Gastrocnemius medialis (tissue), 4 donors: ENCODE measurements at regions of chr7 and their contacts with region 1.

Region 1: GRCh38 chr7:99504603-99505323 is at the start of gene ZKSCAN5:
- DNase-seq: peak; percentile 98
- ATAC-seq: peak; percentile 93
- H3K4me3 ChIP-seq: peak within 1 kb of the TSS; percentile 82 to 99 (median 94)
- H3K27ac ChIP-seq: peak within 1 kb of the TSS; percentile 97 to 99 (median 98)
- H3K4me1 ChIP-seq: peaks cover 29 to 30% of the 10 kb centered on the region in 2 donors
- H3K27me3 ChIP-seq: no peaks in the 10 kb centered on the region
- CTCF ChIP-seq: peak in 1 of 5 experiments; percentile 14
- POLR2A ChIP-seq: peak; percentile 53 to 83
- total RNA-seq, gene ZKSCAN5: 7.3 to 12.3 (median 10.5) TPM

Region 2: DNA sequence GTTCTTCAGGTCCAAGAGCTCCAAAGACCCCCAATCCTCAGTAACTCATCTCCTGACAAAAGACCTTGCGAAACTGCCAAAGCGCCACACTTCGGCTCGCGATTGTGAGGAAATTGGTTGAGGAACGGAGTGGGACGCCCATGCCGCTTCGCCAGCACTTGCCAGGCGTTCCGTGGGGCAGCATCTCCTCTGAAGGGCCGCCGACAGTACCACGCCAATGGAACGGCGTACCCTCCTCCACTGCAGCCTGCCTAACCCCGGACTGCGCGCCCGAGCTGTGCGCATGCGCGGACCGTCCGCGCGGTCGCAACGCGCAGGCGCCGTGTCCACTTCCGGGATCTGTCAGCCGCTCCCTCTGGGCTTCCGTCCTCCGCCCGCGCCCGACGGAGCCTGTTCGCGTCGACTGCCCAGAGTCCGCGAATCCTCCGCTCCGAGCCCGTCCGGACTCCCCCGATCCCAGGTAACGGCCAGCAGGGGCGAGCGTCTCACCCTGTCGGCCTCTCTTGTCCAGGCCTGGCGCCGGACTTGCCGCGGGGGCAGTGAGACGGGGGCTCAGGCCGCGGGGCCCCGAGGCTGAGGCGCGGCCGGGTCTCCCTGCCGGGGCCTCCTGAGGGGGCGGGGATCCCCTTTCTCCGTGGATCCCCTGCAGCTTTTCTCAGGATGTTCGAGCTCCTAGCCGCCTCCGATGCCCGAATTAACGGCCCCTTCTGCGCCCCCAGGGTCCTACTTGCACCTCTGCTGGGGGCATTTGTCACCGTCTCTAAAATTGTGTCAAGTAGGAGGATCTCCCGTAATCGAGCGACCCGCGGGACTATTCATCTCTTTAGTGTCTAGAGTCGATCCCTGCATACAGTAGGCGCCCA is 179.0 kb before region 1 on chr7 and contains the start of gene ARPC1A:
- in situ Hi-C with region 1: no loop called
- intact Hi-C with region 1: loop called (anchors 5 kb)
- DNase-seq: peak; percentile 82 to 88
- ATAC-seq: peak; percentile 93 to 97
- H3K4me3 ChIP-seq: peak within 1 kb of the TSS; percentile 97 to 99 (median 98)
- H3K27ac ChIP-seq: peak within 1 kb of the TSS; percentile 88 to 95 (median 94)
- H3K4me1 ChIP-seq: peaks cover 53 to 54% of the 10 kb centered on the region in 2 donors
- H3K27me3 ChIP-seq: no peaks in the 10 kb centered on the region
- CTCF ChIP-seq: peak; percentile 28 to 39 (median 30)
- POLR2A ChIP-seq: peak; percentile 60 to 76
- total RNA-seq, gene ARPC1A: 37.0 to 58.8 (median 44.1) TPM

Region 3: DNA sequence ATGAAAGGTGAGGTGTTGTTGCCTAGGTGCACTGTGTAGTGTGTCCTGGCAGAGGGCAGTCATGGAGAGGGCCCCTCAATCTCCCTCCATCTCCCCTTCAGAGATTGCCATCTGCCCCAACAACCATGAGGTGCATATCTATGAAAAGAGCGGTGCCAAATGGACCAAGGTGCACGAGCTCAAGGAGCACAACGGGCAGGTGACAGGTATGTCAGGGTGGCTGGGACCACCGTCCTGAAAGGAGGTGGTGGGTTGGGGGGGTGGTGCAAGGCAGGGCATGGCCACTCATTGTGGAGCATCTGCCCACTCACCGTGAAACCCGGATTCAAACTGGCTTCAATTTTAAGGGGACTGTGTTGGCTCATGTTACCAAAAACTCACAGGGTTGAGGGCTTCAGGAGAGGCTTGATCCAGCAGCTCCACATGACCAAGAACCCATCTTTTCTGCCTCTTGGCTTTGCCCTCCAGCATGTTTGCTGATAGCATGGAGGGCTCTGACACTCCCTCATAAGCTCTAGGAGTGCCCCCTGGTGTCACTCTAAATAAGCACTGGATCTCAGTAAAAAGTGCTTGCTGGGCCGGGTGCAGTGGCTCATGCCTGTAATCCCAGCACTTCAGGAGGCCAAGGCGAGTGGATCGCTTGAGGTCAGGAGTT is 118.1 kb before region 1 on chr7:
- in situ Hi-C with region 1: no loop called
- intact Hi-C with region 1: no loop called
- DNase-seq: no peak
- ATAC-seq: peak in 1 of 2 donors; percentile 21
- H3K4me3 ChIP-seq: no peak overlapping the region
- H3K27ac ChIP-seq: no peak overlapping the region
- H3K4me1 ChIP-seq: no peaks in the 10 kb centered on the region
- H3K27me3 ChIP-seq: no peaks in the 10 kb centered on the region
- CTCF ChIP-seq: no peak
- POLR2A ChIP-seq: no peak

Region 4: DNA sequence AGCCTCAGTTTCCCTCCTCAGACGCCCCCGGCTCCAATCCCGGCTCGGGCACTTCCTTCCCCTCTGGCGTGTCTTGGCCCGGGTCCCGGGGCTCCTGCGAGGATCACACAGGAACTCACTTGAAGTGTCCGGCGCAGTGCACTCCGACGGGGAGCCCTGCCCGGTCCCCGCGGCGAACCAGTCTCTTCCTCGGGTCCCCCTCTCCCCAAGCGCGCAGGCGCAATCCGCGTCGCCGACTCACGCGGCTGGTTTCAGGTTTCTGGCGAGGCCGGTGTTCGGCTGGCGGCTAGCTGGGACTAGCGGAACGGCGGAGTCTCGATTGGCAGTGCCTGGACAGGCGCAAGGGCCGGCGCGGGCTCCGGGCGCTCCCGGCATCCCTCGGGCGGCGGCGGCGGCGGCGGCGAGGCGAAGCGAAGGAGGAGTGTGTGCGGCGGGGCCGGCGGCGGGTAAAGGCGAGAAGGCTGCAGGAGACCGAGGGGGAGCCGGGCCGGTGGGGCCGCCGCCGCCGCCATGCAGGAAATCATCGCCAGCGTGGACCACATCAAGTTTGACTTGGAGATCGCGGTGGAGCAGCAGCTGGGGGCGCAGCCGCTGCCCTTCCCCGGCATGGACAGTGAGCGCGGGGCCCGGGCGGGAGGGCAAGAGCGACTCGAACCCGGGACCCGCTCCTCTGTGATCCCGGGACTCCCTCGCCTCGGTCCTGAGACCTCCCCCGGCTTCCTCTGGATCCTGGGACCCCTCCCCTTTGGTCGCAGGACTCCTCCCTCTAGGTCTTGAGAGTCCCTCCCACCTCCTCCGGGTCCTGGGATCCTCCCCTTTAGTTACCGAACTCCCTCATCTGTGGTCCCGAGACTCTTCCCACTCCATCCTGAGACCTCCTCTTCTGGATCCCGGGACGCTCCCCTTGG is 65.9 kb before region 1 on chr7 and contains the starts of genes CPSF4 and PTCD1:
- in situ Hi-C with region 1: no loop called
- intact Hi-C with region 1: loop called (anchors 2 kb)
- DNase-seq: peak; percentile 95 to 96
- ATAC-seq: peak; percentile 94 to 97
- H3K4me3 ChIP-seq: peak within 1 kb of the TSS; percentile 83 to 99 (median 96)
- H3K27ac ChIP-seq: peak within 1 kb of the TSS; percentile 92 to 98 (median 96)
- H3K4me1 ChIP-seq: peaks cover 28 to 37% of the 10 kb centered on the region in 2 donors
- H3K27me3 ChIP-seq: no peaks in the 10 kb centered on the region
- CTCF ChIP-seq: no peak
- POLR2A ChIP-seq: peak; percentile 78 to 85
- total RNA-seq, gene CPSF4: 21.4 to 40.4 (median 26.1) TPM
- total RNA-seq, gene PTCD1: 7.8 to 14.1 (median 10.9) TPM

Region 5: DNA sequence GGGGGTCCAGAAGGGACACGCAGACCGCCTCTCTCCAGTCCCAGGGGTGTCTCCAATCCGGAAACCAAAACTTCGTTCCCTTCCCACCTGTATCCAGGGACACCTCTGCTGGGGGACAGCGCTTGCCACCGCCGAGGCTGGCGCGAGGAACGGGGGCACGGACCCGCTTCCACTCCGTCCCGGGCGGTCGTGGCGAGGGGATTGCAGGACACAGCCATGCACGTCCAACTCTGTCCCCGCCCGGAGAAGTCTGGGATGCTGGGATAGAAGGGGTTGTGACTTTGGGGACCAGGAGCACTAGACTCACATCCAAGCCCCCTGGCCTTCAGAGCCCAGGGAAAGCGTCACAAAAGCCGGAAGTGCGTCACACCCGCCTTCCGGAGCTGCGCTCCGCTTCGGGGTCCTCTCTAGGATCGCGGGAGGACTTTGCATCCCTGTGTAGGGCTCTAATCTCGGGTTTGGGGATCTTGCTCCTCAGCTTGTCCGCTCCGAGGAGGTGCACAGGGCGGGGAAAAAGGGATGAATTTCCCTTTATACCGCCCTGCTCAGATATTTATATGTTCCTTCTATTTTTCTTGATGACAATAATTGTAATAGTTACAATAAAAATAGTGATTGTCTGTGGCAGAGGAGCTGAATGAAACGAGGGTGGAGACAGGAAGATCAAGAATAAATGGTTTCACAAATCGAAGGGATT is 47.2 kb after region 1 on chr7 and contains the start of gene FAM200A:
- in situ Hi-C with region 1: loop called in 2 of 4 experiments (anchors 5 to 10 kb)
- intact Hi-C with region 1: no loop called
- DNase-seq: peak; percentile 74 to 76
- ATAC-seq: peak; percentile 97 to 98
- H3K4me3 ChIP-seq: peak within 1 kb of the TSS; percentile 92 to 99 (median 96)
- H3K27ac ChIP-seq: peak within 1 kb of the TSS; percentile 83 to 94 (median 92)
- H3K4me1 ChIP-seq: peaks cover 14 to 15% of the 10 kb centered on the region in 2 donors
- H3K27me3 ChIP-seq: no peaks in the 10 kb centered on the region
- CTCF ChIP-seq: no peak
- POLR2A ChIP-seq: peak; percentile 65 to 81
- total RNA-seq, gene FAM200A: 2.3 to 5.7 (median 3.8) TPM

Region 6: DNA sequence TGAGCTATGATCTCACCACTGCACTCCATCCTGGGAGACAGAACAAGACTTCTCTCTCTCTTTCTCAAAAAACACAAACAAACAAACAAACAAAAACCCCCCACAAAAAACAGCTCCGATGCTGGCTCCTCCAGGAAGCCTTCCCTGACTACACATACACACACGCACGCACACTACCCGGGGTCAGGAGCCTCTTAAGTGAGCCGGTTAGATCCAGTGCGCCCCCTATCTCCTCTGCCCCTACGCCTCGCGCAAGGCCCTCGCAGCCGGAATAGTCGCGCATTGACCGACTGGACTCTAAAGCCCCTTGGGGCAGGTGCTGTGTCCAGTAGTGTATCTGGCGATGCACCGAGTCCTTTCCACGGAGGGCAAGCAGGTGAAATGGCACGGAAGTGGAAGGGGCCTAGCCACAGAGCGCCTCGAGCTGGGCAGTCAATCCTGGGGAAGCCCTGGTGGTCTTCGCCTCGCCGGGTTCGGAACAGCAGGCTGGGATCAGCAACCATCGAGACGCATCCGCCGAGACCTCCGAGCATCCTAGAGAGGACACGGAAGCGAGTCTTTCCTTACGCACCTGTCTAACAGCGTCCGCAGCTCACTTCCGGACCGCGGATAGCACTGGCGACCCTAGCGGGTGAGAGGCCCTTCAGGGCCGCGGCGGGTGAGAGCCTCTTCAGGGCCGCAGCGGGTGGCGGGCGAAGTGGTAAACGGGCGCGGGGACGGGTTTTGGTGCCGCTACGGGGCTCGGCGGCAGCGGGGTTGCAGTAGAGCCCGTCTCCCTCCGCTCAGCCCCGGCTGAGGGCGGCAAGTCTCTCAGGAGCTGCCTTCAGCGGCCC is 111.8 kb after region 1 on chr7 and contains the start of gene ZSCAN25:
- in situ Hi-C with region 1: no loop called
- intact Hi-C with region 1: loop called (anchors 2 kb)
- DNase-seq: peak; percentile 78 to 85
- ATAC-seq: peak; percentile 98
- H3K4me3 ChIP-seq: peak within 1 kb of the TSS; percentile 97 to 99 (median 98)
- H3K27ac ChIP-seq: peak within 1 kb of the TSS; percentile 87 to 93 (median 91)
- H3K4me1 ChIP-seq: peaks cover 12 to 16% of the 10 kb centered on the region in 2 donors
- H3K27me3 ChIP-seq: no peaks in the 10 kb centered on the region
- CTCF ChIP-seq: peak in 2 of 5 experiments; percentile 18 to 50
- POLR2A ChIP-seq: peak; percentile 36 to 66
- total RNA-seq, gene ZSCAN25: 6.0 to 7.9 (median 7.2) TPM

Region 7: GRCh38 chr7:99794585-99795502 is 290.1 kb after region 1 on chr7:
- in situ Hi-C with region 1: no loop called
- intact Hi-C with region 1: no loop called
- DNase-seq: no peak
- ATAC-seq: no peak
- H3K4me3 ChIP-seq: no peak overlapping the region
- H3K27ac ChIP-seq: no peak overlapping the region
- H3K4me1 ChIP-seq: peaks cover under 1% of the 10 kb centered on the region in 2 donors
- H3K27me3 ChIP-seq: no peaks in the 10 kb centered on the region
- CTCF ChIP-seq: no peak
- POLR2A ChIP-seq: no peak